ENCODE measurements at regions of chr12 and their contacts with region 1.

Region 1: DNA sequence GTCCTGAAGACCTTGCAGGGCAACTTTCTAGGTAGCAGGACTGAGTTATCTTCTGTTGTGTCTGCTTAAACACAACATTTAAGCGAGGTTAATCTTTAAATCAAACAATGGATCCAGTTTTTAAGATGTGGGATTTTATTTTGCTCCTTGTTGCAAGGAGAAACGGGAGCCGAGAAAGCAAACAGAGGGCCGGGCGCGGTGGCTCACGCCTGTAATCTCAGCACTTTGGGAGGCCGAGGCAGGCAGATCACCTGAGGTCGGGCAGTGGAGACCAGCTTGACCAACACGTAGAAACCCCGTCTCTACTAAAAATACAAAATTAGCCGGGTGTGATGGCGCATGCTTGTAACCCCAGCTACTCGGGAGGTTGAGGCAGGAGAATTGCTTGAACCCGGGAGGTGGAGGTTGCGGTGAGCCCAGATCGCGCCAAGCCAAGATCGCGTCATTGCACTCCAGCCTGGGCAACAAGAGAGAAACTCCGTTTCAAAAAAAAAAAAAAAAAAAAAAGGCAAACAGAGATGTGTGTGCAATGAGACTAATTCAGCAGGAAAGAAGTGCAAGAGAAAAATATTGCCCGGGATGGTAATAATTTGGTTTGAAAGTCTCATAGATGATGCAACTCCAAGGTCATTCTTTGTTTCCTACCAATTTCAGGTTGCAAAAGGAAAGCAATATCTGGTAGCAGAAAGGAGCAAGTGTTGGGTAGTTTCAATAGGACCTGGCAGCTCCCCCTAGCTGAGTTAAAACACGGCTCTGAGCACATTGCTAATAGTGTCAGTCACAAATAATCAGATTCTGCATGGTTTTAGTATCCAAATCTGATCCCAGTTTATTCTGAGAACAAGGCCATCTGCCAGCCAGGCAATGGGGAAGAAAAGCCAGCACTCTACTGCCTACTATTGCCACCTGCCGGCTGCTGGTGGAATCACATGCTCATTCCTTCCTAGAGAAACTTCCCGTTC is 141.4 kb downstream of the PPM1H start:
- DNase-seq: peak; percentile 77
- H3K4me3 Mint-ChIP-seq: no peak overlapping the region
- H3K27ac Mint-ChIP-seq: no peak overlapping the region
- H3K4me1 Mint-ChIP-seq: no peaks in the 10 kb centered on the region
- H3K27me3 Mint-ChIP-seq: peaks cover 4% of the 10 kb centered on the region

Region 2: GRCh38 chr12:62522984-62523383 is 270.6 kb before region 1 on chr12:
- CTCF ChIA-PET with region 1: interaction called, 20 read pairs
- DNase-seq: no peak
- H3K4me3 Mint-ChIP-seq: no peak overlapping the region
- H3K27ac Mint-ChIP-seq: no peak overlapping the region
- H3K4me1 Mint-ChIP-seq: peaks cover 16% of the 10 kb centered on the region
- H3K27me3 Mint-ChIP-seq: no peaks in the 10 kb centered on the region

Region 3: DNA sequence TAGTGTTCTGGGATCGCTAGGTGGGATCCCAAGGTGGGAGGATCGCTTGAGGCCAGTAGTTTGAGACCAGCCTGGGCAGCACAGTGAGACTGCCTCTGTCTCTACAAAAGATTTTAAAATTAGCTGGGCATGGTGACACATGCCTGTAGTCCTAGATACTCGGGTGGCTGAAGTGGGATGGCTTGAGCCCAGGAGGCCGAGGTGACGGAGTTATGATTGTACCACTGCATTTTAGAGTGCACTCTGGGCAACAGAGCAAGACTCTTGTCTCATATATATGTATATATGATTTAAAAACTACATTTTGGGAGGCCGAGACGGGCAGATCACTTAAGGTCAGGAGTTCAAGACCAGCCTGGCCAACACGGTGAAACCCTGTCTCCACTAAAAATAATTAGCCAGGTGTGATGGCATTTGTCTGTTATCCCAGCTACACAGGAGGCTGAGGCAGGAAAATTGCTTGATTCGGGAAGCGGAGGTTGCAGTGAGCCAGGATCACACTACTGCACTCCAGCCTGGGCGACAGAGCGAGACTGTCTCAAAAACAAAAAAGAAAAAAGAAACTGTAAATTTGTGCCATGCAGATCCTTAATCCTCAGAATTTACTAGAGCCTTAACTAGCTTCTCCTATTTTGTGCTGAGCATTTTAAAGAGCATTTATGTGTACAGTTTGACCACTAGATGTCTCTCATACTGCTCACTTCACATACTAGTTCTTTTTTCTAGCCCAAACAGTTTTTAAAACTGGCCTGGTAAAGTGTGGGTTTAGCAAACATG is 212.1 kb before region 1 on chr12:
- CTCF ChIA-PET with region 1: interaction called, 60 read pairs
- DNase-seq: no peak
- H3K4me3 Mint-ChIP-seq: no peak overlapping the region
- H3K27ac Mint-ChIP-seq: no peak overlapping the region
- H3K4me1 Mint-ChIP-seq: no peaks in the 10 kb centered on the region
- H3K27me3 Mint-ChIP-seq: no peaks in the 10 kb centered on the region

Region 4: DNA sequence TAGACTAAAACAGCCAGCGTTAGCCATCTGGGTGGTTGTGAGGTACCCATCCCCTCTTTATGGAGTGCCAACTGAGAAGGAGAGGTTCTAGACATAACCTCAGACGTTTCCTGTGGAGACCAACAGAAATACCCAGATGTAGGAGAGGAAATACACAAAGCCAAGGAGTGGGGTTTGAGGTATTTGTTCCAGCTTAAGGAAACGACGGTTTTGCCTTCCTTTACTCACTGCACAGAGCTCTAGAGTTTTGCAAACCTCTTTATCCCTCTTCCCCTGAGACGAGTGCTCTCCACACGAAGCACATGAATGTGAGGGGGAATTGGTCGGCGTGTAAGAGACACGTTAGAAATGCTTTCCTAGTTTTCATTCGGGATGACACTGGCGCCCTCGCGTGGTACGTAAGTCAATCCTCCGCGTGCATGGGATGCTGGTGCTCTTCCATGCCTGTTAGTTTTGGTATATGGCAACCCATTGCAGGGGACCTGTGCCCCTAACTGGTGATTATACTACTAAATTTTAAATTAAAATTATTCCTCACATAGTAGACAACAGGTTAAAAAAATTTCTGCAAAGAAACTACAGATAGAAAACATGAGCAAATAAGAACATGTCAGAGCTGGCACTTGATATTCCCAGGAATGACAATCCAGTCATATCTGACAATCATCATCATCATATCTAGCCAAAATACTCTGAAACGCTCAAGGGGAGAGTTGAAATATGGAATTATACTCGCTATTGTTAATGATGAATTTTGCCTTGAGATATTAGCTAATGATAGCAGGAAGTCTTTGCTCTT is 19.7 kb after region 1 on chr12:
- CTCF ChIA-PET with region 1: interaction called, 14 read pairs
- DNase-seq: peak; percentile 49
- H3K4me3 Mint-ChIP-seq: no peak overlapping the region
- H3K27ac Mint-ChIP-seq: no peak overlapping the region
- H3K4me1 Mint-ChIP-seq: peaks cover 13% of the 10 kb centered on the region
- H3K27me3 Mint-ChIP-seq: peaks cover 14% of the 10 kb centered on the region